Endothelial cell of umbilical vein (primary cell): ENCODE measurements at regions of chr20 and their contacts with region 1.

Region 1: DNA sequence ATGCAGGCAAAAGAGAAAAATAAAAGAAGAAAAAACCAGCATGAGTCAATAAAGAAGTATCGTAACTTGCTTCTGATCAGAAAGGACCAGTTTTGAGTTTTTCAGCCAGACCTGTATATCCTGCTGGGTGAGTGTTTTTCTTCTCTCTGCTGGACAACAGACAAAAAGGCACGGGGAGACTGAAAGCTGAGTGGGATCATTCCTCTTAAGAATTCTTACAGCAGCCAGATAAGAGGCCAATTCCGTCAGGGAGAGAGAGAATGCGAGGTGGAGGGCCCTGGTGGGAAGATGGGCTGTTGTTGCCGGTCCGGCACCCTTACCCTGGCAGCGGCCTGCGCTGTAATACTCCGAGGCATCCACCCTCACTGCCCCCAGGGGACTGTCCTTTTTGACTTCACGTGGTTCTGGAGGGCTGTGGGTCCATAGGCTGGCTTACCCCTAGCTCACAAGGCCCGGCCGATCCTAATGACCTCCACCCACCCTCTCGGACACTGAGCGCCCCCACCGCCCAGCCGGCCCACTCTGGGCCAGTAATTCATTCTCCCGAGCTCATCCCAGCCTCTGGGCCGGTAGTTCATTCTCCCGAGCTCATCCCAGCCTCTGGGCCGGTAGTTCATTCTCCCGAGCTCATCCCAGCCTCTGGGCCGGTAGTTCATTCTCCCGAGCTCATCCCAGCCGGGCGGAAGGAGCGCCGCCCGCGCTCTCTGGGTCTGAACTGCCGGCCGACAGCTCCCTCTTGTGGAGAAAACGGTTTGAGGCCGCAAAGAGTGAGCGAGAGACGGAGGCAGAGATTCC is 118.3 kb upstream of the SIRPA start:
- DNase-seq: peak; percentile 81
- H3K4me3 ChIP-seq: peak overlapping the region; percentile 41 to 88 (median 77)
- H3K27ac ChIP-seq: peak overlapping the region; percentile 38
- H3K4me1 ChIP-seq: peaks cover 7% of the 10 kb centered on the region
- H3K27me3 ChIP-seq: peaks cover 0 to 6% of the 10 kb centered on the region in 2 experiments
- CTCF ChIP-seq: peak; percentile 67 to 85
- POLR2A ChIP-seq: peak; percentile 26

Region 2: DNA sequence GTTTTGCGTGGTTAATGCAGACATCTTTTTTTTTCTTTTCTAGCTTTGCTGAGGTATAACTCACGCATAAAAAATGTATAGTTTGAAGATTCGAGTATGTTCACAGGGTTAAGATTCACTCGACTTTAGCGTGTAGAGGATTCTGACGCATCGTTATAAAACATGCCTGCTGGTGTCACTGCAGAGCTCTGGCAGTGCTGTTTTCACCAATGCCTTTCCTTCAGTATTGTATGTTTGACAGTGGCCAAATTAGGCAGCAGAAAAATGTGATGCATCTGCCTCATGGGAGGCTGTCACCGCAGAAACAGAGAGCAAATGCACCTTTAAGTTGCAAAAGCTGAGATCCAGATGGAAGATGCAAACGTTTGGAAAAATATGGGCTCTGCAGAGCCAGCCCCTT is 267.6 kb before region 1 on chr20:
- CTCF ChIA-PET with region 1: interaction called, 79 read pairs
- POLR2A ChIA-PET with region 1: no interaction called
- dilution Hi-C with region 1: no loop called
- intact Hi-C with region 1: no loop called
- DNase-seq: peak; percentile 36
- H3K4me3 ChIP-seq: no peak overlapping the region
- H3K27ac ChIP-seq: no peak overlapping the region
- H3K4me1 ChIP-seq: no peaks in the 10 kb centered on the region
- H3K27me3 ChIP-seq: peaks cover 26 to 43% of the 10 kb centered on the region in 2 experiments
- CTCF ChIP-seq: peak; percentile 24 to 48
- POLR2A ChIP-seq: no peak

Region 3: GRCh38 chr20:1757606-1758512 is 19.0 kb before region 1 on chr20:
- CTCF ChIA-PET with region 1: interaction called, 10 read pairs
- POLR2A ChIA-PET with region 1: no interaction called
- dilution Hi-C with region 1: no loop called
- intact Hi-C with region 1: no loop called
- DNase-seq: no peak
- H3K4me3 ChIP-seq: no peak overlapping the region
- H3K27ac ChIP-seq: no peak overlapping the region
- H3K4me1 ChIP-seq: peaks cover 3% of the 10 kb centered on the region
- H3K27me3 ChIP-seq: peaks cover 3 to 8% of the 10 kb centered on the region in 2 experiments
- CTCF ChIP-seq: no peak
- POLR2A ChIP-seq: no peak

Region 4: DNA sequence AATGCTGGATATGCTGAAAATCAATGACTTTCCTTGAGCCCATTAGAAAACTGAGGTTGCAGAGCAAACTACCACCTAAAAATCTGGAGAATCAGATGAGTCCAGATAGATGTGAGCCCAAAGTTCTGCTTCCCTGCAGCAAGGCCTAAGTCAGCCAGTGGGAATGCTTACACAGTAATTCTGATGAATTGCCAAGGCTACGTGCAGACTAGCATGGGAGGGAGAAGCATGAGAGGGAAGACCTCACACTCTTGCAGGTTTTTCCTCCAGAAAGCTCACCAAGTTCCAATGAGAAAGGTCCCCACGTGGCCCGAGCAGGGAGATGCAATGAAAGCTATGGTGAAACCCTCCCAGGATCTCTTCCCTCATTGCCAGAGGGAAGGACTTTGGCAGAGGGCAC is 13.5 kb after region 1 on chr20:
- CTCF ChIA-PET with region 1: interaction called, 17 read pairs
- POLR2A ChIA-PET with region 1: no interaction called
- dilution Hi-C with region 1: no loop called
- intact Hi-C with region 1: no loop called
- DNase-seq: no peak
- H3K4me3 ChIP-seq: no peak overlapping the region
- H3K27ac ChIP-seq: no peak overlapping the region
- H3K4me1 ChIP-seq: peaks cover 17% of the 10 kb centered on the region
- H3K27me3 ChIP-seq: peaks cover 21 to 33% of the 10 kb centered on the region in 2 experiments
- CTCF ChIP-seq: no peak
- POLR2A ChIP-seq: no peak

Region 5: GRCh38 chr20:2101865-2102584 is 325.1 kb after region 1 on chr20:
- CTCF ChIA-PET with region 1: no interaction called
- POLR2A ChIA-PET with region 1: interaction called, 5 read pairs
- dilution Hi-C with region 1: no loop called
- intact Hi-C with region 1: loop called (anchors 10 kb)
- DNase-seq: peak; percentile 90
- H3K4me3 ChIP-seq: peak overlapping the region; percentile 49 to 77 (median 65)
- H3K27ac ChIP-seq: peak overlapping the region; percentile 98
- H3K4me1 ChIP-seq: peaks cover 16% of the 10 kb centered on the region
- H3K27me3 ChIP-seq: peaks cover 0 to 2% of the 10 kb centered on the region in 2 experiments
- CTCF ChIP-seq: no peak
- POLR2A ChIP-seq: peak; percentile 75